ENCODE measurements at regions of chr12 and their contacts with region 1.

Region 1: DNA sequence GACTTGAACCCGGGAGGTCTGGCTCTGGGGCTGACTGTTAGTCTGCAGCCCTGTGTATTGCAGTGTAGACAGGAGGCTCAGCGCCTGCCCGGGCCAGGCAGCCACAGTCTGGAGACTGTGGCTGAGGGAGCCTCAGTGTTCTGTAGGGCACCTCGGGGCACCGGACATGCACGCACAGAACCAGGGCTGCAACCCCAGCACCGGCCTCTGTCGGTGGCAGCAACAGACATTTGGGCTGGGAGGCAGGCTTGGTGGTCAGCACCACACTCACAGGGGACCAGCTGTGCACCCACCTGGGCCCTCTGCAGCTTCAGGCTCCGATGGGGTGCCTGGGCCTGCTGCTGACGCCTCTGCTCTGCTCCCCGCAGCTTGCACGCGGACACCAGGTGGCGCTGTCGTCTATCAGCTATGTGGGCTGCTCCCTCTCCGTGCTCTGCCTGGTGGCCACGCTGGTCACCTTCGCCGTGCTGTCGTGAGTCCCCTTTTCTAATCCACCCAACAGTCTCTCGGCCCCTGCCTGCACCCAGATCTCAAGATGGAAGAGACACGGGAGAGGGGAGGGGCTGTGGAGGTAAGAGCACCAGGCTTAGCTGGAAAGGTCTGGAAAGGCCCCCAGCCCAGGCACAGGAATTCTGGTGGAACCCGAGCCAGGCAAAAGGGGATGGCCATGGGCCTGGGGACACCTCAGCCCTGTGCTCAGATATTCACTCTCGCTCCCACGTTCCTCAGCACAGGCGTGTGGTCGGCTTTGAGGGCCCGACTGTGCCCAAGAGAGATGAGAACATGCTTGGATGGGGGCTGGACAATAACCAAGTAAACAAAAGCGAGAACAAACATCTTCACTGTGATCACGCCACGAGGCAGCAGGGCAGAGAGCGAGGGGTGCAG is 151.0 kb downstream of the ADGRD1 start:
- DNase-seq: peak; percentile 86
- ATAC-seq: peak; percentile 94
- H3K4me3 Mint-ChIP-seq: no peak overlapping the region
- H3K27ac Mint-ChIP-seq: no peak overlapping the region
- H3K4me1 Mint-ChIP-seq: peaks cover 20% of the 10 kb centered on the region
- H3K27me3 Mint-ChIP-seq: no peaks in the 10 kb centered on the region

Region 2: DNA sequence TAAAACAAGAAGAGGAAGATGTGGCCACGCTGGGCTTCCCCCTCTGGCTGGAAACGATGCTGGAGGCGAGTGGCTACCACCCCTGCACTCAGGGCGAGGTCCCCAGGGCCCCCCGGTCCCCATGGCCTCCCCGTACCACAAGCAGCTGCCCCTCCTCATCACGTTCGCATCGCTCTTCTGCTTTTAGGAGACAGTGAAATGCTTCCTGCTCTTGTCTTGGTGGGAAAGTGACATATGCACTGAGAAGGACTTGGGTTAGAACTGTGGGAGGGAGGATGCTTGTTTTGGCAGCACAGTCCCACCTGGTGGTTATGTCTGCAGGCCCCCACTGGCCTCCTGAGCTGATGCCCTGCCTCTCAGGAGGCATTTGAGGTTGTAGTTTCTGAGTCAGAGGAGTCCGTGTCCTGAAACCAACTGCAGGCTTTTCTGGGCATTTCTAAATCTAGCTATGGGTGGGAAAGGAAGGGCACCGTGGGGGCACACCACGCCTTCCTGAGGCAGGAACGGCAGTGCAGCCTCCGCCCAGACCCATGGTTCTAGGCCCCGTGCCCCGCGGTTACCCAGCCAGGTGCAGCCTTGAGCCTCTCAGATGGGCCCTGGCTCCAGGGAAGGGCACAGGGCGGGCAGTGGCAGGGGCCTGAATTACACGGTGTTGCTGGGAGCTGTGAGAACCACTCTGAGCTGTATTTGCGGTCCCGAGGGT is 11.7 kb before region 1 on chr12:
- CTCF ChIA-PET with region 1: interaction called, 34 read pairs
- POLR2A ChIA-PET with region 1: no interaction called
- DNase-seq: peak; percentile 54
- ATAC-seq: peak; percentile 71
- H3K4me3 Mint-ChIP-seq: no peak overlapping the region
- H3K27ac Mint-ChIP-seq: peak overlapping the region; percentile 35
- H3K4me1 Mint-ChIP-seq: peaks cover 24% of the 10 kb centered on the region
- H3K27me3 Mint-ChIP-seq: no peaks in the 10 kb centered on the region

Region 3: GRCh38 chr12:131116391-131117117 is 11.8 kb after region 1 on chr12:
- CTCF ChIA-PET with region 1: interaction called, 45 read pairs
- POLR2A ChIA-PET with region 1: no interaction called
- DNase-seq: no peak
- ATAC-seq: no peak
- H3K4me3 Mint-ChIP-seq: no peak overlapping the region
- H3K27ac Mint-ChIP-seq: no peak overlapping the region
- H3K4me1 Mint-ChIP-seq: no peaks in the 10 kb centered on the region
- H3K27me3 Mint-ChIP-seq: peaks cover 3% of the 10 kb centered on the region

Region 4: DNA sequence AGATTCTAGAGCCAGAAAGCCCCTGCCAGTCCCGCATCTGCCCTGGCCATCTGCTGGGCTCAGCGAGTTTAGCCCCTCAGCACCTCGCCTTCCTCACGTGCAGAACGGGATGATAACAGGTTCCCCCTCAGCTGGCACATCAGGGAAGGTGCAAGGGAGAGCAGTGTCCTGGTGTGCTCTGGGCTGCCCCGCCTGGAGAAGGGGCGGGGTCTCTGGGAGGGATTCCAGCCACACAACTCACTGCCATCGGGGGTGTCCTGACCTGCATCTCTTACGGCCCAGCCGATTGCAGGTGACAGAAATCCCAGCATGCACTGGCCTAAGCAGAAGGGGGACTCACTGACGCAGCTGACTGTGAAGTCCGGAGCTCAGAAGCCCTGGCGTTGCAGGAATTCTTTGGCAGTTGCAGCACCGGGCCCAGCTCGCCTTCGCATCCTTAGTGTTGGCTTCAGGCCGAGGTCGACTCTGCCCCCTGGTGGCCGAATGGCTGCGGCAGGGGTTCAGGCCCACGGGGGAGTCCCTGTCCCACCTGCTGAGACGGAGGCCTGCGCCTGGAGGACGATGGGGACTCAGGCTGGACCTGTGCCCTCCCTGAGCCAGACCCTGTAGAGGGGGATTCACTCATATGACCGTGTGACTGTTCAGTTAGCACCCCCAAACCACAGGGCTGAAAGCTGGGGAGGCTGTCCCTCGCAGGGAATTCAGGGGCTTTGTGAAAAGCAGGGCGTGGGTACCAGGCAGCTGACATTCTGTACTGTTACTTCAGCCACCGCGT is 27.6 kb after region 1 on chr12:
- CTCF ChIA-PET with region 1: interaction called, 104 read pairs
- POLR2A ChIA-PET with region 1: interaction called, 3 read pairs
- DNase-seq: peak; percentile 73
- ATAC-seq: peak; percentile 82
- H3K4me3 Mint-ChIP-seq: no peak overlapping the region
- H3K27ac Mint-ChIP-seq: no peak overlapping the region
- H3K4me1 Mint-ChIP-seq: no peaks in the 10 kb centered on the region
- H3K27me3 Mint-ChIP-seq: no peaks in the 10 kb centered on the region

Region 5: GRCh38 chr12:131222256-131223139 is 117.8 kb after region 1 on chr12:
- CTCF ChIA-PET with region 1: no interaction called
- POLR2A ChIA-PET with region 1: no interaction called
- DNase-seq: peak; percentile 45
- ATAC-seq: peak; percentile 46
- H3K4me3 Mint-ChIP-seq: no peak overlapping the region
- H3K27ac Mint-ChIP-seq: no peak overlapping the region
- H3K4me1 Mint-ChIP-seq: peaks cover 19% of the 10 kb centered on the region
- H3K27me3 Mint-ChIP-seq: peaks cover under 1% of the 10 kb centered on the region